ENCODE measurements at regions of chr4 and their contacts with region 1.

Region 1: DNA sequence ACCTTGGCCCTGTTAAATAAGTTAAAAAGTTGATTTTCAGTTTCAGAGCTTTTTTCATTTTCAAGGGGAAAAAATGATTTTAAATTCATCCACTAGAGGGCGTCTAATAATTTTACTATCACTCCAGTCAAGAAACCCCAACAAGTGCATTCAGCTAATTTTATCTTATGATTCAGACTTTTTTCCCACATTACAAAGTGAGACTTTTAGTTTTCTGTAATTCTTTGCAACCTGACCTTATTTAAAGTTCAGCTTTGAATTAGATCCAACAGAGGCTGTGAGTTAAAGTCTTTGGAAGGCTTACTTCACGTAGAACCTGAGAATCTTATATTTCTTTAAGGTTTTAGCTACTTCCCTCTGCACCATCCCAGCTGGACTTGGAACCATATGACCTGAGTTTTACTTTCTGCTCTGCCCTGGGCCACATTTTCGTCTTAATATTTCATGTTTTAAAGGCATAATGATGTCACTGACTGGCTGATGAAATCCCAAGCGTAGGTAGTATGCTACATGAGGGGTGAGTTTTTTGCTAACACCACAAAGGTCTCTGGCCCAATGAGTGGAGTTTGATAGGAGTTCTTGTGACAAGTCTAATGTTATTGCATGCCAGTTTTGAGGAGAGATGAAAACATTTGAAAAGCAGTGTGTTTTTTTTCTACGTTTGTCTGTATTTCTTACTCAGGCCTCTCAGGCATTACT is 7.2 kb downstream of the GNRHR start:
- DNase-seq: peak; percentile 37
- ATAC-seq: no peak
- H3K4me3 ChIP-seq: no peak overlapping the region
- H3K27ac ChIP-seq: no peak overlapping the region
- H3K4me1 ChIP-seq: no peaks in the 10 kb centered on the region
- H3K27me3 ChIP-seq: no peaks in the 10 kb centered on the region
- CTCF ChIP-seq: peak; percentile 30 to 59 (median 33); a peak in 5 of 6 replicates
- POLR2A ChIP-seq: no peak
- RAD21 ChIP-seq: peak; percentile 31; the same call in 1 of the 2 replicates

Region 2: GRCh38 chr4:67736262-67736661 is 10.7 kb before region 1 on chr4:
- CTCF ChIA-PET with region 1: interaction called, 22 read pairs
- POLR2A ChIA-PET with region 1: interaction called, 3 read pairs
- RAD21 ChIA-PET with region 1: no interaction called
- intact Hi-C with region 1: no loop called
- DNase-seq: no peak
- ATAC-seq: no peak
- H3K4me3 ChIP-seq: no peak overlapping the region
- H3K27ac ChIP-seq: no peak overlapping the region
- H3K4me1 ChIP-seq: no peaks in the 10 kb centered on the region
- H3K27me3 ChIP-seq: no peaks in the 10 kb centered on the region
- CTCF ChIP-seq: no peak
- POLR2A ChIP-seq: no peak
- RAD21 ChIP-seq: no peak

Region 3: GRCh38 chr4:67762086-67762485 is 15.1 kb after region 1 on chr4:
- CTCF ChIA-PET with region 1: interaction called, 19 read pairs
- POLR2A ChIA-PET with region 1: no interaction called
- RAD21 ChIA-PET with region 1: no interaction called
- intact Hi-C with region 1: no loop called
- DNase-seq: no peak
- ATAC-seq: no peak
- H3K4me3 ChIP-seq: no peak overlapping the region
- H3K27ac ChIP-seq: no peak overlapping the region
- H3K4me1 ChIP-seq: no peaks in the 10 kb centered on the region
- H3K27me3 ChIP-seq: no peaks in the 10 kb centered on the region
- CTCF ChIP-seq: no peak
- POLR2A ChIP-seq: no peak
- RAD21 ChIP-seq: no peak

Region 4: DNA sequence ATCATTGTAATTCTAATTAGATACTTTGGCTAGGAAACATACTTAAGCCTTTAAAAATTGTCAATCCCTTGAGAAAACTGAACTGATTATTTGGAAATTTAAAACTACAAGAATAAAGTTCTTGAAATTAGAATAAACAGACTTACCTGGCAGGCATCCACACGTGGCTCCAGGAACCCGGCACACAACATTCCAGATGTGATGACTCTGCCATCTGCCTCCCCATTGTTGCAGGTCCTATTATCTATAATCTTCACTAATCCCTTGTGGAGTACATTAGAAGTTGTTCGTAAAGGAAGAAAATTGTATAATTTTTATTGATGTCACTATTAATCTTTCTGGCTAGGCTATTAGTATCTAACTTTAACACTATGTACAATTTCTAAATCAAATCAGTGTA is 23.5 kb after region 1 on chr4:
- CTCF ChIA-PET with region 1: interaction called, 16 read pairs
- POLR2A ChIA-PET with region 1: no interaction called
- RAD21 ChIA-PET with region 1: no interaction called
- intact Hi-C with region 1: no loop called
- DNase-seq: no peak
- ATAC-seq: no peak
- H3K4me3 ChIP-seq: no peak overlapping the region
- H3K27ac ChIP-seq: no peak overlapping the region
- H3K4me1 ChIP-seq: 0 out of 4 replicates have a peak, but pooled peaks cover 0 to 4% of the 10 kb centered on the region in 2 experiments
- H3K27me3 ChIP-seq: no peaks in the 10 kb centered on the region
- CTCF ChIP-seq: no peak
- POLR2A ChIP-seq: no peak
- RAD21 ChIP-seq: no peak

Measured in HCT116 (cell line).